SK-N-SH (cell line): ENCODE measurements at regions of chr3 and their contacts with region 1.

Region 1: GRCh38 chr3:136042608-136043221 is 77.2 kb downstream of the PPP2R3A start:
- DNase-seq: peak; percentile 53
- H3K4me3 ChIP-seq: no peak overlapping the region
- H3K27ac ChIP-seq: no peak overlapping the region
- H3K4me1 ChIP-seq: no peaks in the 10 kb centered on the region
- H3K27me3 ChIP-seq: no peaks in the 10 kb centered on the region
- CTCF ChIP-seq: peak; percentile 84
- EP300 ChIP-seq: no peak
- RAD21 ChIP-seq: peak; percentile 76

Region 2: GRCh38 chr3:135895106-135895733 is 147.5 kb before region 1 on chr3:
- CTCF ChIA-PET with region 1: interaction called, 25 read pairs
- POLR2A ChIA-PET with region 1: no interaction called
- DNase-seq: peak; percentile 57
- H3K4me3 ChIP-seq: no peak overlapping the region; a peak in 1 of 4 replicates
- H3K27ac ChIP-seq: no peak overlapping the region
- H3K4me1 ChIP-seq: no peaks in the 10 kb centered on the region
- H3K27me3 ChIP-seq: no peaks in the 10 kb centered on the region
- CTCF ChIP-seq: peak; percentile 96
- EP300 ChIP-seq: no peak
- RAD21 ChIP-seq: peak; percentile 94

Region 3: DNA sequence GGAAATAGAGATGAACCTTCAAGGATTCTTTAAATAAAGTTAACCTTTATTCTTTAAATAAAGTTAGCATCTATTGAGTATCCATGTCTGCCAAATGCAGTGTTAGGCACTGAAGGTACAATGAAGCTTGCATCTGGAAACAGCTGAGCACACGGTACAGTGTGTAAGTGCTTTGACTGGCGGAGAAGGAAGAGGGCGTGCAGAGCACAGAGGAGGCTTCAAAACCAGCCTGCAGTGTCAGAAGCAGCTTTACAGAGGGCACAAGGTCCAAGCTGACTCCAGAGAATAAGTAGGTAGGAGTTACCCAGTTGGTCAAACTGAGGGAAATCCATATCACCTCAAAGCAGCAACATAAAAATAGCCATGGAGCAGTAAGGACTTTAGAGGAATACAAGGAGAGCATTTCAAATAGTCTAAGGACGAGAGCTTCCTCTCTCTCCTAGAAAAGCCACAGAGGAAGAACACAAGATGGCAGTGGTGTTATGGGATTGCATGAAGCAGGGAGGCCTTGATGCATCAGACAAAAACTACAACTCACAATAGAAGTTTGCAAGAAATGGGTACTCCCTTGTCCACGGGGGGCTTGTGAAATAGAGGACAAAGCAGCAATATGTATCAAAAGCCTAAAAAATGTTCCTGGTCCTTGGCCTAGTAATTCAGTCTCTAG is 137.5 kb before region 1 on chr3:
- CTCF ChIA-PET with region 1: interaction called, 55 read pairs
- POLR2A ChIA-PET with region 1: no interaction called
- DNase-seq: no peak
- H3K4me3 ChIP-seq: no peak overlapping the region
- H3K27ac ChIP-seq: no peak overlapping the region
- H3K4me1 ChIP-seq: no peaks in the 10 kb centered on the region
- H3K27me3 ChIP-seq: no peaks in the 10 kb centered on the region
- CTCF ChIP-seq: peak; percentile 40
- EP300 ChIP-seq: no peak
- RAD21 ChIP-seq: peak; percentile 56

Region 4: DNA sequence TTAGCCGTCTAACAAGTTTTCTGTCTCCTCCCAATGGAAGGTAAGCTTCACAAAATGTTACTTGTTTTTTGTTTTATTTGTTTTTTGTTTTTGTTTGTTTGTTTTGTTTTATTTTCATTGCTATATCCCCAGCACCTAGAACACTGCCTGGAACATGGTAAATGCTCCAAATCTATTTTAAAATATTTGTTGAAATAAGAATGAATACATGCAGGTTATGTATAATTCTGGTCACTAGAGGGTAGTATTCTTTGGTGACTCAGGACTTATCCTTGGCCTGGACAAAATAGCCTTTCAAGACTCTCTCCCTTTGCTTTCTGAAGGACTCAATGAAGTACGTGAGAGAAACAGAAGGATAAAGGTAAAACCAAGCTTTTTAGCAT is 124.1 kb before region 1 on chr3:
- CTCF ChIA-PET with region 1: interaction called, 153 read pairs
- POLR2A ChIA-PET with region 1: no interaction called
- DNase-seq: peak; percentile 30
- H3K4me3 ChIP-seq: no peak overlapping the region
- H3K27ac ChIP-seq: no peak overlapping the region
- H3K4me1 ChIP-seq: no peaks in the 10 kb centered on the region
- H3K27me3 ChIP-seq: no peaks in the 10 kb centered on the region
- CTCF ChIP-seq: peak; percentile 67
- EP300 ChIP-seq: no peak
- RAD21 ChIP-seq: peak; percentile 68

Region 5: DNA sequence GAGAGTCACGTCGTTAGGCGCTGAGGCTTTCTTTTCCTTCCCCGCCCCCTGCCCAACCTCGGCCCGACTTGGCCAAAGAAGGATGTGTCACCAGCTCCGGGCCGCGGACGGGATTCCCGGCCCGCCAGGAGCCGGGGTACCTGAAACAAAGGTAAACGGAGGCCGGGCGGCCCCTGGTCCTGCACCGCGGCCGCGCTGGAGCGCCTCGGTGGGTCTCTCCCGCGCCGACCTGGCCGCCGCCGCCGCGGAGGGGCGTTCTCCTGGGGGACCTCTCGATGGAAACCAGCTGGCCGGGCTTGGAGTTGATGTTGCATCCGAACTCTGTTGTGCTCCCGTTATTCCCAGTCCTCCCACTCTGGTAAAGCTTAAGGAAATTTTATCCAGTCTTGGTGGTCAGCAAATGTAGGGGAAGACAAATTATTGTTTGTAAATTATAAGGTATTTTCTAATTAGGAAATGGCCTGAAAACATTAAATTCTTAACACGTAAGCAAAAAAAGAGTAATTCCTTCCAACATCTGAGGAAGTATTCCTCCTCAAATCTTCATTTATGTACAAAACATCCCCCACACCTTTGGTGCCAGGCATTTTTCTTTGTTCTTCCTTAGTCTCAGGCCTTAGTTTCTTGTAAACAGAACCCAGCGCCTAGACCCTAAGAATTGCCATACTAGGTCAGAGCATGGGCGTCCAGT is 76.3 kb before region 1 on chr3:
- CTCF ChIA-PET with region 1: interaction called, 12 read pairs
- POLR2A ChIA-PET with region 1: no interaction called
- DNase-seq: peak; percentile 6
- H3K4me3 ChIP-seq: peak overlapping the region; percentile 85 to 88
- H3K27ac ChIP-seq: peak overlapping the region; percentile 85
- H3K4me1 ChIP-seq: peaks cover 0 to 8% of the 10 kb centered on the region in 2 experiments; a peak in 3 of 4 replicates
- H3K27me3 ChIP-seq: no peaks in the 10 kb centered on the region
- CTCF ChIP-seq: no peak
- EP300 ChIP-seq: 0 out of 4 replicates have a peak, but pooled peaks of 1 of the 2 experiments have one; percentile 15
- RAD21 ChIP-seq: no peak

Region 6: GRCh38 chr3:136018876-136019275 is 23.8 kb before region 1 on chr3:
- CTCF ChIA-PET with region 1: interaction called, 28 read pairs
- POLR2A ChIA-PET with region 1: no interaction called
- DNase-seq: no peak
- H3K4me3 ChIP-seq: no peak overlapping the region
- H3K27ac ChIP-seq: peak overlapping the region in 1 of 2 experiments; percentile 56; a peak in 2 of 4 replicates
- H3K4me1 ChIP-seq: peaks cover 5 to 11% of the 10 kb centered on the region in 2 experiments; a peak in 3 of 4 replicates
- H3K27me3 ChIP-seq: no peaks in the 10 kb centered on the region
- CTCF ChIP-seq: no peak
- EP300 ChIP-seq: no peak
- RAD21 ChIP-seq: no peak

Region 7: DNA sequence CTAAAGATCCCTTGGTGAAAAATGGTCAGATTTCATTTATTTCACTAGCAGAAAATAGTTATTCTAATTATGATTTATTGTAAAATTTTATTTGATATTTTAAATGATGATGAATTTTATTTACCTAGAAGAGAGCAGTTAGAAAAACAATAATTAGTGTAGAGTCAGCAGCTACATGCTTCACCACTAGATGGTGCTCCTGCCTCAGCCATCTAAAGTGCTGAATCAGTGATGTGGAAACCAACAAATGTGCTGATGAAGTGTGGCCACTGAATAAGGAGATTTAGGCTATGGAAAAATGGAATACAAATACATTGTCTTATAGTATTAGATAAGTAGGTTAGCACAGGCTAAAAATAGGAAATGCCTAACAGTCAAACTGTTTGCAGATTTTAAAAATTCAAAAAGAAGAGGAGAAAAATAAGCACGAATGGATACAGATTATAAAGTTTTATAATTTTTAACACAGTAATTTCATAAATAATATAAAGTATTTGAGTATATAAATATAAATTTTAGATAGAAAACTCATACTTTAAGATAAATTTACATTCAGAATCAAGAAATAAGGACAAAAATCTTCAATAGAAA is 32.6 kb after region 1 on chr3:
- CTCF ChIA-PET with region 1: interaction called, 10 read pairs
- POLR2A ChIA-PET with region 1: no interaction called
- DNase-seq: peak; percentile 53
- H3K4me3 ChIP-seq: no peak overlapping the region
- H3K27ac ChIP-seq: peak overlapping the region in 1 of 2 experiments; percentile 66; a peak in 2 of 4 replicates
- H3K4me1 ChIP-seq: peaks cover 7 to 10% of the 10 kb centered on the region in 2 experiments
- H3K27me3 ChIP-seq: no peaks in the 10 kb centered on the region
- CTCF ChIP-seq: peak; percentile 93
- EP300 ChIP-seq: no peak
- RAD21 ChIP-seq: peak; percentile 99

Region 8: GRCh38 chr3:136186344-136186743 is 143.6 kb after region 1 on chr3:
- CTCF ChIA-PET with region 1: no interaction called
- POLR2A ChIA-PET with region 1: no interaction called
- DNase-seq: no peak
- H3K4me3 ChIP-seq: no peak overlapping the region
- H3K27ac ChIP-seq: no peak overlapping the region
- H3K4me1 ChIP-seq: peaks cover under 1 to 5% of the 10 kb centered on the region in 2 experiments; a peak in 2 of 4 replicates
- H3K27me3 ChIP-seq: no peaks in the 10 kb centered on the region
- CTCF ChIP-seq: no peak
- EP300 ChIP-seq: no peak
- RAD21 ChIP-seq: no peak